ENCODE measurements at regions of chr3 and their contacts with region 1.

Region 1: DNA sequence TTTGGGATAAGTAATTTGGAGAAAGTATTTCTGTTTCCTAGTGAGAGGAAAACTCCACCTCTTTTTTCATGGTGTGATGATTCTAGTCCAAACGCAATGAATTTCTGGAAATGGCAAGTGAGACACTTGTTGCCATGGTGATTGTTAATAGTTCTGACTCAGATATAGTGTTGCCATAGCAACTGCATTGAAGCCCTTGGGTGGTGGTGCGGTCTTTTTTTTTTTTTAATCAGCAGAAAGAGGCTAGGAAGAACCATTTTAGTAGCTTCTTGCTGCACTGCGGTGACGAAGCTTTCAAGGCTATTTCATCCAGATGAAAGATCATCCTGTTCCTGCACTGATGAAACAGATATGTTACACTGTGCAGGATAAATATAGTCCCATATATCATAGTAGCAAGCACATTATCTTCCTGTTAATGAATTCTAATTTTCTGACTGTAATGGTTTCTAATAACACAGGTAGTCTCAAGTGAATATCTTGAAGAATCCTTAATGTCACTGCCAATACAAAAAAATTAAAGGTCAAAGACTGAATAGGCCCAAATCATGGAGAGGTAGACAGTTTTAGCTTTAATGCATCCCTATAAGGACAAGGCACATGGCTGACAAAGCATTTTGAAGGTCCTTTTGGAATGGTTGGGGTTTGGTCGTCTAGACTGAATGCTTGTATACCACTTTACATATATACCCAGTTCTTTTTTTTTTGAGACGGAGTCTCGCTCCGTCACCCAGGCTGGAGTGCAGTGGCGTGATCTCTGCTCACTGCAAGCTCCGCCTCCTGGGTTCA is 125.1 kb upstream of the ZBTB20 start:
- DNase-seq: no peak
- H3K4me3 ChIP-seq: no peak overlapping the region
- H3K27ac ChIP-seq: no peak overlapping the region
- H3K4me1 ChIP-seq: no peaks in the 10 kb centered on the region
- H3K27me3 ChIP-seq: no peaks in the 10 kb centered on the region
- CTCF ChIP-seq: no peak

Region 2: DNA sequence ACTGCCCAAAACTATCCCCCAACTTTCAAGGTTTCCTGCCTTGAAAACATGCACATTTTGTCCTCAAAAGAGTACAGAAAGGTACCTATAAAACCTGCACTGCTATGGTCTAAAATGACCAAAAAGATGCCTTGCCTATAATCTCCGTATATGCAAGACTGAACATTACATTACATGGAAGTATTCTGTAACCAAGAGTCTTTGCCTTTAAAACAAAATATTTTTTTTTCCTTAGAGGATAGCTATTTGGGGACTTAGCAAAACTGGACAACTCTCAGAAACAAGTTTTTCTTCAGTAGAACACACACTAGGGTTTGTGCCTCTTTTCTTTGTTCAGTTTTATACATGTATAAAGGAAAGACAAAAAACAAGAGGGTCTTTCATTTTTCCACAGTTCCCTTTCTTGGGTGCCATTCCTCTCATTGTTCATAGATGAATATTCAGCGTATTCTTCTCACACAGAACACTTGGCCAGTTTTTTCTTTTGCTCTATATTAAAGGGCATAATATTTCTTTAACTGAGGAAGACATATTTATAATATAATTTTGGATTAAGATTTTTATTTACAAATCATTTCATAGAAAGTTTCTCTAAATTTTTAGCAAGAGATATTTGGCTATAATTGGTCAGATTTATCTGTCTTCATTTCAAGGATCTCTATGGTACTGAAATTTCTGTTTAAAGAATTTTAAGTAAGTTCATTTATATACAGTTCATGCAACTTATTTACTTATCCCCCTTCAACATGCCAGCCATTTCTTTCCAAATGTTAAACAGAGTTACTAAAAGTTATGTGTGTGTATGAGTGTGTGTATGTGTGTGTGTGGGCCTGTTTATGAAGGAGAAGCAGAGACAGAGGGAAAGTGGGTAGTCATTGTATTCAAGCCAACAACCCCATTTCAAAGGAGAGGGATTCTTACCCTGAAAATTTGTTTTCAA is 267.8 kb before region 1 on chr3:
- CTCF ChIA-PET with region 1: no interaction called
- POLR2A ChIA-PET with region 1: no interaction called
- intact Hi-C with region 1: no loop called
- DNase-seq: no peak
- H3K4me3 ChIP-seq: no peak overlapping the region
- H3K27ac ChIP-seq: no peak overlapping the region
- H3K4me1 ChIP-seq: no peaks in the 10 kb centered on the region
- H3K27me3 ChIP-seq: no peaks in the 10 kb centered on the region
- CTCF ChIP-seq: no peak

Region 3: DNA sequence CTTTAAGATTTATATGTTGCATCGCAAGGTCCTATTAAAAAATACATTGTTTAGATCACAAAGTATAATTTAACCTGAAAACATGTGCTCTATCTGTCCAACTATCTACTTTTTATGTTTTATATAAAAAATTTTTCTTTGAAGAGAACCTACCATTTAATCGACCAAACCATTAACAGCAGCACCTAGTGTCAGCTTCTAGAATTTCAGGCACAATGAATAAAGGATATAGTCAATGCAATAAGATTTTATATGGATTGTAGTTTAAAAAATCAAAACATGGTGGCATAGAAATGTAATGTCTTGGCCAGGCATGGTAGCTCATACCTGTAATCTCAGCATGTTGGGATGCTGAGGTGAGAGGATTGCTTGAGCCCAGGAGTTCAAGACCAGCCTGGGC is 664.8 kb after region 1 on chr3:
- CTCF ChIA-PET with region 1: no interaction called
- POLR2A ChIA-PET with region 1: interaction called, 11 read pairs
- intact Hi-C with region 1: no loop called
- DNase-seq: no peak
- H3K4me3 ChIP-seq: no peak overlapping the region
- H3K27ac ChIP-seq: no peak overlapping the region
- H3K4me1 ChIP-seq: no peaks in the 10 kb centered on the region
- H3K27me3 ChIP-seq: no peaks in the 10 kb centered on the region
- CTCF ChIP-seq: peak; percentile 62